BJ (cell line): ENCODE measurements at regions of chr12 and their contacts with region 1.

Region 1: DNA sequence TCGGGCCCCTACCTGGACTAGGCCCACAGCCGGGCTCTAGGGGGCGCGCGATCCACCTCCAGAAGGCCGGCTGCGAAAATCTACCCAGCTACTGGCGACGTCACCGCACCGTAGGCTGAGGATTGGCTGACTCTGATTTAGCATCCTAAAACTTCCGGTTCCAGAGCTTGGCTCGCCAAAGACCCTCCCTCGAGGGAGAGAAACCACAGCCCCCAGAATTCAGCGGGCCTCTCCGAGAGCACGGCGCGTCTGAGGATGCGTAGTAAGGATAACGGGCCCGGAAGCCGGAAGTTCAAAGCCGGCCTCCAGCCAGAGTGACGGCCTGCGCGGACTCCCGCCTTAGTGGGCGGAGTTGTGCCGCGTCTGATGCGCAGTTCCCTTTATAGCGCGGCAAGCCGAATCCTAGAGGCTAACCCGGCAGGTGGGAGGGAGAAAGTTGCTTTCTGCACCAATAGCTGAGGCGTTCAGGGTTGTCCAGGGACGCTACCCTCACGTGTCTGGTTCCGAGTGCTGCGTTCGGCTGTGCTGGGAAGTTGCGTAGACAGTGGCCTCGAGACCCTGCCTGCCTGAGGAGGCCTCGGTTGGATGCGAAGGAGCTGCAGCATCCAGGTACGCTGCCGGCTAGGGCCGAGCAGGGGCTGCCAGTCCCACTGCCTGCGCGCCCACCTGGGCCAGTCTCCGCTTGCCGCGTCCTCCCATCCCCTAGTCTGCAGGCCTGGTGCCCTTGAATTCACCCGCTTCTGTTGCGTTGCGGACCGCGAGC is at the start of gene COX14:
- DNase-seq: peak; percentile 98
- H3K4me3 ChIP-seq: peak within 1 kb of the TSS; percentile 100
- H3K27me3 ChIP-seq: no peaks in the 10 kb centered on the region
- CTCF ChIP-seq: peak; percentile 98
- polyA plus RNA-seq, gene COX14: 85.7 and 104 TPM in 2 replicates

Region 2: GRCh38 chr12:50084775-50085614 is 26.9 kb before region 1 on chr12 and contains the start of gene SMARCD1:
- CTCF ChIA-PET with region 1: interaction called, 58 read pairs
- POLR2A ChIA-PET with region 1: interaction called, 8 read pairs
- DNase-seq: peak; percentile 48
- H3K4me3 ChIP-seq: peak within 1 kb of the TSS; percentile 62
- H3K27me3 ChIP-seq: no peaks in the 10 kb centered on the region; the same call in 1 of the 2 replicates
- CTCF ChIP-seq: peak; percentile 78
- polyA plus RNA-seq, gene SMARCD1: 48.9 and 56.0 TPM in 2 replicates

Region 3: GRCh38 chr12:50132505-50133135 is 20.7 kb after region 1 on chr12:
- CTCF ChIA-PET with region 1: interaction called, 12 read pairs
- POLR2A ChIA-PET with region 1: no interaction called
- DNase-seq: no peak
- H3K4me3 ChIP-seq: no peak overlapping the region
- H3K27me3 ChIP-seq: no peaks in the 10 kb centered on the region
- CTCF ChIP-seq: no peak

Region 4: GRCh38 chr12:50167041-50167828 is 55.4 kb after region 1 on chr12 and contains the start of gene CERS5:
- CTCF ChIA-PET with region 1: interaction called, 25 read pairs
- POLR2A ChIA-PET with region 1: interaction called, 3 read pairs
- DNase-seq: peak; percentile 94
- H3K4me3 ChIP-seq: peak within 1 kb of the TSS; percentile 59
- H3K27me3 ChIP-seq: no peaks in the 10 kb centered on the region
- CTCF ChIP-seq: no peak
- polyA plus RNA-seq, gene CERS5: 68.0 and 100 TPM in 2 replicates

Region 5: DNA sequence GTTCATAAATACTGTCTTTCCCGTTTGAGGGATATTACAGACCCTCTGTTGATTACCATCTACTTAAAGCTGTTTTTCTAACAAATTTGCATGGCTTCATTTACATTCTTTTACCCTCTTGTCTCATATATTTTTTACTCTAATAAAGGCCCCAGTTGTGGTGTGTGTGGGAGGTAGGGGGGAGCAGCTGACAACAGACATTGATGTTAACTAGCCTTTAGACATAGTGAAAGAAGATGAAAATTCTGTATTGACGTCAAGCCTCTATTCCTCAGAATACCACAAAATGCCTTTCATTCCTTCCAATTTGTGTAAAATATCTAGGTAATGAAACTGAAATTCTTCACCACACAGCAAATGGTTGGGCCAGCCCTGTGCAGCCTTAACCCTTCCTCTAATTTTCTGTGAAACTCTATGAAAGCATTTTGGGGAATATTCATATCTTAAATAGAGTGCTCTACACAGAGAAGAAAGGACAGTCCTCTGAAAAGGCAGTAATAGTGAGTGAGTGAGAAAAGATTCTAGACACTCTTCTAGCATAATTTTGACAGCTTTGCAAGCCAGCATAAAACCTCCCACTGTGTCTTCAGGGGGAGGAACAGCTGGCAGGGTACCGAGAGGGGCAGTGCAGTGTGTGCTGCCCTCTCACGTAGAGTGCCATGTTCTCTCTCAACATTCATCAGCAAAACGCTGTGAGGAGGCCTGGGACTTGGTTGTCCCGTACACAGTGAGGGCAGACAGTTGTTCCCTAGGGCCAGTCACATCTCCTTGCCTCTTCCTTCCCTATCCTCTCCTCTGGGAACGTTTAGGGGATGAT is 75.4 kb after region 1 on chr12:
- CTCF ChIA-PET with region 1: interaction called, 11 read pairs
- POLR2A ChIA-PET with region 1: interaction called, 4 read pairs
- DNase-seq: peak; percentile 94
- H3K4me3 ChIP-seq: no peak overlapping the region
- H3K27me3 ChIP-seq: no peaks in the 10 kb centered on the region
- CTCF ChIP-seq: no peak